ENCODE measurements at regions of chr12 and their contacts with region 1.

Region 1: GRCh38 chr12:112537710-112538396 is 119.1 kb downstream of the PTPN11 start:
- DNase-seq: peak; percentile 84
- H3K4me3 ChIP-seq: no peak overlapping the region
- H3K27ac ChIP-seq: peak overlapping the region; percentile 81
- H3K4me1 ChIP-seq: peaks cover 6% of the 10 kb centered on the region
- H3K27me3 ChIP-seq: no peaks in the 10 kb centered on the region
- CTCF ChIP-seq: no peak

Region 2: DNA sequence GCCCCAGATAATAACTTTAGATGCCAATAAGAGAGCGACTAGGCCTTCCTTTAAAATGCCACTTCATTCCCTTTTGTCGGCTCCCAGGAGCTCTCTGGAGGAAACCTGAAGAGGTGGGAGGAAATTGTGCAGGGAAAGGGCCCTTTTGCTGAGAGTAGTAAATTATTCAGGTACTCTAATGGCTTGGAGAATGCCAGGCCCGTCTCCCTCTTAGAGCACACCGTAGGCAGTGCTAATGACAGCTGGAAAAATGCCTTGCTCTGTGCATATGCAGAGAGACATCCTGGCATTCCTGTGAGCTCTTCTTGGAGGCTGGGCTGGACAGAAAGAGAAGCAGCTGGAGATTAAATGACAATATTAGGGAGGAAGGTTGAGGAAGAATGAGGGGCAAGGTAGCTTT is 138.7 kb after region 1 on chr12:
- CTCF ChIA-PET with region 1: interaction called, 6 read pairs
- POLR2A ChIA-PET with region 1: no interaction called
- intact Hi-C with region 1: loop called (anchors 2 kb)
- DNase-seq: peak; percentile 52
- H3K4me3 ChIP-seq: no peak overlapping the region
- H3K27ac ChIP-seq: peak overlapping the region; percentile 81
- H3K4me1 ChIP-seq: peaks cover 33% of the 10 kb centered on the region
- H3K27me3 ChIP-seq: no peaks in the 10 kb centered on the region
- CTCF ChIP-seq: no peak

Region 3: DNA sequence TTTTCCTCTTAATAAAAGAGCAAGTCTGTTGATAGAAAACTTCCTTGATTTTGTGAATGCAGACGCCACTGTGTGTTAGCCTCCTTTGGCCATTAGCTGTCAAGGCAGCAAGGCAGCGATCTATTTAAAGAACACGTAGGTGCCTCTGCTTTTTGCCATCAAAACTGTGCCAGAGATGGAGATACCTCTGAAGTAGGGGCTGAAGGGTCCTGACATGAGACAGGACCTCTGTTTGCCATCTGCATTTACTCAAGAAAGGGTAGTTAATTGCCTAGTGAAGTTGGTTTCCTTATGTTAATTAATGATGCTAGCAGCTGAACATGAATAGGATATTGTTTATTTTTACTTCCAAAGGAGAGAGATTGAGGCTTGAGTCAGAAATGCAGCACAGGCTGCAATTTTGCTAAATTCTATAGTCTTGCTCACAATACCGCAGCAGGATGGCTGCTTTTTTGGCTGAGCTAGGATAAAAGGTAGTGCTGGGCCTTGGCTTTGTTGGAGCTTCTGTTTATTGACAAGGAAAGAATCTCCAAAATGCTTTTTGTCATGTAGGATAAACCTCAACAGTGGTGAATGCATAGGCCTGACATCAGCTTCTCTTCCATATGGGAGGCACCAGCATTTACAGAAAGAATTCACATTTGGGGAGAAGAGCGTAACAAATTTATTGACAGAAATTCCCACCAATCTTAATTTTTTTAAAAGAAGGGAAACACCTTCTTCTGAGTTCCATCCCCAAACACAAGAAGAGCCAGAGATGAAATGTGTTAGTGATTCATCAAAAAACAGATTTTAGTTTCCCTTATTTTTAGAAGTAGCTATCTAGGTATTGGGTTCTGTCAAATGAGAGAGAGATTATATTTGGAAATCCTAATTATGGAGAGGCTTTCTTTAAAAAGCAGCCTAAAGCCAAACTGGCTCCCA is 239.8 kb after region 1 on chr12:
- CTCF ChIA-PET with region 1: no interaction called
- POLR2A ChIA-PET with region 1: no interaction called
- intact Hi-C with region 1: no loop called
- DNase-seq: no peak
- H3K4me3 ChIP-seq: no peak overlapping the region
- H3K27ac ChIP-seq: no peak overlapping the region
- H3K4me1 ChIP-seq: no peaks in the 10 kb centered on the region
- H3K27me3 ChIP-seq: no peaks in the 10 kb centered on the region
- CTCF ChIP-seq: no peak